Activated CD8-positive, alpha-beta T cell treated with anti-CD3 and anti-CD28 coated beads, Interleukin-2, amount 10 ng/mL, durations not matched to agents 7 days and 5 days (primary cell): ENCODE measurements at regions of chr16 and their contacts with region 1.

Region 1: GRCh38 chr16:66961065-66961744 is at the start of gene CES3:
- DNase-seq: peak; percentile 79
- ATAC-seq: peak; percentile 97
- H3K4me3 Mint-ChIP-seq: peak within 1 kb of the TSS; percentile 48
- H3K27ac Mint-ChIP-seq: peak within 1 kb of the TSS; percentile 86
- H3K4me1 Mint-ChIP-seq: peaks cover 39% of the 10 kb centered on the region
- H3K27me3 Mint-ChIP-seq: peaks cover 2% of the 10 kb centered on the region
- total RNA-seq, gene CES3: 2.4 to 4.3 TPM

Region 2: GRCh38 chr16:66842765-66843164 is 118.4 kb before region 1 on chr16:
- CTCF ChIA-PET with region 1: no interaction called
- POLR2A ChIA-PET with region 1: no interaction called
- DNase-seq: no peak
- ATAC-seq: no peak
- H3K4me3 Mint-ChIP-seq: no peak overlapping the region
- H3K27ac Mint-ChIP-seq: no peak overlapping the region
- H3K4me1 Mint-ChIP-seq: peaks cover 17% of the 10 kb centered on the region
- H3K27me3 Mint-ChIP-seq: peaks cover 64% of the 10 kb centered on the region

Region 3: DNA sequence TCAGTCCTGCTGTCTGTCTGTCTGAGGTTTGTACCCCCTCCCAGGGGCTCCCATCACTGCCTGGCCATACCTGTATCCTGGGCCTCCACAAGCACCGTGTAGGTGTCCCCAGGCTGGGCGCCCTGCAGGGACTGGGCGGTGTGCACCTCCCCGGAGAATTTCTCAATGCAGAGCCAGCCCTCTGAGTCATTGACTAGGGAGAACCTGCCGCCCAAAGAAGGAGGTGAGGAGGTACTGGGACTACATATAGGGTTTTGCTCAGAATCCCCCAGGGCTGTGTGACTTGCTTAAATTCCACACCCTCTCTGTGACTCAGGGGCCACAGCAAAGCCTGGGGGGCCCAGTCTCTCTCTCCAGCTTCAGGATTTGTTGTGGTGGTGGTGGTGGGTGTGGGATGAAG is 50.1 kb before region 1 on chr16:
- CTCF ChIA-PET with region 1: no interaction called
- POLR2A ChIA-PET with region 1: no interaction called
- DNase-seq: no peak
- ATAC-seq: no peak
- H3K4me3 Mint-ChIP-seq: no peak overlapping the region
- H3K27ac Mint-ChIP-seq: no peak overlapping the region
- H3K4me1 Mint-ChIP-seq: peaks cover 2% of the 10 kb centered on the region
- H3K27me3 Mint-ChIP-seq: no peaks in the 10 kb centered on the region

Region 4: GRCh38 chr16:66947302-66948065 is 13.7 kb before region 1 on chr16:
- CTCF ChIA-PET with region 1: interaction called, 10 read pairs
- POLR2A ChIA-PET with region 1: no interaction called
- DNase-seq: peak; percentile 91
- ATAC-seq: peak; percentile 90
- H3K4me3 Mint-ChIP-seq: peak overlapping the region; percentile 81
- H3K27ac Mint-ChIP-seq: no peak overlapping the region
- H3K4me1 Mint-ChIP-seq: peaks cover 23% of the 10 kb centered on the region
- H3K27me3 Mint-ChIP-seq: peaks cover 36% of the 10 kb centered on the region

Region 5: DNA sequence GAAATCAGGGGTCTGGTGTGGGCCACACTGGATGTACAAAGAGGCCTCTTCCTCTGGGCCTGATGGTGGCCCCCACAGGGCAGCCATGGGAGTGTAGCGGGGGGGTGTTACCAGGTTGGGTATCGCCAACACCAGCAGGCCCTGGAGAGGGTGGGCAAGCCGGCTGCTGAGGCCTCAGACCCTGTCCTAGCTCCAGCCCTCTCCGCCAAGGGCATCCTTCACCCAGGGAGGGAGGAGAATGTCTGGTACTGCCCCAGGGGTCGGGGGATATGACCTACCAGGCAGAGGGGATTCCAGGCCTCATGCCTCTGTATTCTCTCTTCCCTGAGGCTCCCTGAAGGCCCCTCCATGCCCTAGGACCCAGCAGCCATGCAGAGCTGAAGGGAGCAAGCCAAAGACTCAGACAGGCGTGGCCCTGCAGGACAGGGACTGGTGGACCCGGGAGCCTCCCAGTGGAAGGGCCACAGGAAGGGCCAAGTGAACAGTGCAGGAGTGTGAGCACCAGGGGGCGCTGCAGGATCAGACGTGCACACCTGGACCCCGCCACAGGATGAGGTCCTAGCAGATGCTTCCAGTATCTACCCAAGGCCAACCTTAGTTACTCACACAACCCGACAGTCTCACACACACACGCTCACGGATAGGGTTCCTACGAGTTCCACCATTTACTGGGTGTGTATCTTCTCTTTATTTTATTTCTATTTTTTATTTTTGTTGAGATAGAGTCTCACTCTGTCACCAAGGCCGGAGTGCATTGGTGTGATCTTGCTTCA is 16.3 kb after region 1 on chr16:
- CTCF ChIA-PET with region 1: interaction called, 11 read pairs
- POLR2A ChIA-PET with region 1: interaction called, 3 read pairs
- DNase-seq: peak; percentile 94
- ATAC-seq: peak; percentile 99
- H3K4me3 Mint-ChIP-seq: no peak overlapping the region
- H3K27ac Mint-ChIP-seq: peak overlapping the region; percentile 73
- H3K4me1 Mint-ChIP-seq: peaks cover 60% of the 10 kb centered on the region
- H3K27me3 Mint-ChIP-seq: no peaks in the 10 kb centered on the region

Region 6: DNA sequence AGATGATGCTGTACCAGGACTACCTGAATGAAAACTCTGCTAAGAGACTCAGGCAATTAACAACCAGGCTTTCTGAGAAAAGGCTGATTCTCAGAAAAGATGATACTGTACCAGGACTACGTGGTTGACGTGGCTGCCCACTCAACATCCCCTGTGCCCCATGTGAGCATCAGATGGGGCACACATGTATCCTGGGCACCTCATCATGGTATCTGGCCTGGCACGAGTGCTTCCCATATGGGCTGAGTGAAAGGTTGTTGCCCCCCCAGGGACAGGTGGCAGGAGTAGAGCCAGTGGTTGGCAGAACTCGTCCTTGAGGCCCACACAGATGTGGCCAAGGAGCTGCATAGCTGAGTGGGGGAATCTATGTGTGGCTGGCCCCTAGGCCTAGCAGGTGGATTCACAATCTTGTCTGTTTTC is 23.7 kb after region 1 on chr16:
- CTCF ChIA-PET with region 1: interaction called, 14 read pairs
- POLR2A ChIA-PET with region 1: no interaction called
- DNase-seq: peak; percentile 78
- ATAC-seq: peak; percentile 83
- H3K4me3 Mint-ChIP-seq: peak overlapping the region; percentile 0
- H3K27ac Mint-ChIP-seq: peak overlapping the region; percentile 92
- H3K4me1 Mint-ChIP-seq: peaks cover 67% of the 10 kb centered on the region
- H3K27me3 Mint-ChIP-seq: no peaks in the 10 kb centered on the region